ENCODE measurements at regions of chr12 and their contacts with region 1.

Region 1: GRCh38 chr12:102948941-102949352 is 8.5 kb upstream of the ASCL1 start:
- DNase-seq: no peak
- ATAC-seq: peak; percentile 32
- H3K4me3 ChIP-seq: no peak overlapping the region
- H3K27ac ChIP-seq: no peak overlapping the region
- H3K4me1 ChIP-seq: peaks cover 8% of the 10 kb centered on the region
- H3K27me3 ChIP-seq: no peaks in the 10 kb centered on the region; a peak in 1 of 4 replicates
- CTCF ChIP-seq: peak; percentile 88 to 94 (median 90)
- EP300 ChIP-seq: no peak
- POLR2A ChIP-seq: no peak
- RAD21 ChIP-seq: peak; percentile 88

Region 2: GRCh38 chr12:102728506-102729242 is 220.3 kb before region 1 on chr12:
- CTCF ChIA-PET with region 1: no interaction called
- POLR2A ChIA-PET with region 1: no interaction called
- RAD21 ChIA-PET with region 1: no interaction called
- SMC1A ChIA-PET with region 1: no interaction called
- in situ Hi-C with region 1: no loop called
- intact Hi-C with region 1: no loop called
- DNase-seq: peak; percentile 77
- ATAC-seq: peak; percentile 82
- H3K4me3 ChIP-seq: 0 out of 2 replicates have a peak overlapping the region, but pooled peaks have one; percentile 13
- H3K27ac ChIP-seq: peak overlapping the region; percentile 81
- H3K4me1 ChIP-seq: peaks cover 21% of the 10 kb centered on the region
- H3K27me3 ChIP-seq: no peaks in the 10 kb centered on the region
- CTCF ChIP-seq: no peak
- EP300 ChIP-seq: no peak
- POLR2A ChIP-seq: no peak
- RAD21 ChIP-seq: no peak

Region 3: DNA sequence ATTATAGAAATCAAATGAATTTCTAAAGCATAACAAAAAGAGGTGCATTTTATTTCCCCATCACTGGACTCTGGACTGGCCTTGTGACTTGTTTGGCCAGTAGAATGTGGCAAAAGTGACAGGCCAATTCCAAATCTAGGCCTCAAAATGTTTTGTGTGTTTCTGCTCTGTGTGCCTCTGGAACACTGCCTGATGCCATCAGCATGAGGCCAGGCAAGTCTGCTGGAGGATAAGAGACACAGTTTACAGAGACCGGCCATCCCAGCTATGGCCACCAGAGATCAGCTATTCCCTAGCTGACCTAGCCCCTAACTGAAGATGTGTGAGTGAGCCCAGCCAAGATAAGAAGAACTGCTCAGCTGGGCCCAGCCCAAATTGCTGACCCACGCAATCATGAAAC is 41.5 kb after region 1 on chr12:
- CTCF ChIA-PET with region 1: interaction called, 8 read pairs
- POLR2A ChIA-PET with region 1: no interaction called
- RAD21 ChIA-PET with region 1: interaction called, 12 read pairs
- SMC1A ChIA-PET with region 1: interaction called, 12 read pairs
- in situ Hi-C with region 1: no loop called
- intact Hi-C with region 1: no loop called
- DNase-seq: no peak
- ATAC-seq: peak; percentile 49
- H3K4me3 ChIP-seq: no peak overlapping the region
- H3K27ac ChIP-seq: no peak overlapping the region
- H3K4me1 ChIP-seq: no peaks in the 10 kb centered on the region; the same call in 1 of the 2 replicates
- H3K27me3 ChIP-seq: no peaks in the 10 kb centered on the region
- CTCF ChIP-seq: 0 out of 6 replicates have a peak, but pooled peaks of 1 of the 3 experiments have one; percentile 14
- EP300 ChIP-seq: no peak
- POLR2A ChIP-seq: no peak
- RAD21 ChIP-seq: peak; percentile 46; the same call in 1 of the 2 replicates

Region 4: DNA sequence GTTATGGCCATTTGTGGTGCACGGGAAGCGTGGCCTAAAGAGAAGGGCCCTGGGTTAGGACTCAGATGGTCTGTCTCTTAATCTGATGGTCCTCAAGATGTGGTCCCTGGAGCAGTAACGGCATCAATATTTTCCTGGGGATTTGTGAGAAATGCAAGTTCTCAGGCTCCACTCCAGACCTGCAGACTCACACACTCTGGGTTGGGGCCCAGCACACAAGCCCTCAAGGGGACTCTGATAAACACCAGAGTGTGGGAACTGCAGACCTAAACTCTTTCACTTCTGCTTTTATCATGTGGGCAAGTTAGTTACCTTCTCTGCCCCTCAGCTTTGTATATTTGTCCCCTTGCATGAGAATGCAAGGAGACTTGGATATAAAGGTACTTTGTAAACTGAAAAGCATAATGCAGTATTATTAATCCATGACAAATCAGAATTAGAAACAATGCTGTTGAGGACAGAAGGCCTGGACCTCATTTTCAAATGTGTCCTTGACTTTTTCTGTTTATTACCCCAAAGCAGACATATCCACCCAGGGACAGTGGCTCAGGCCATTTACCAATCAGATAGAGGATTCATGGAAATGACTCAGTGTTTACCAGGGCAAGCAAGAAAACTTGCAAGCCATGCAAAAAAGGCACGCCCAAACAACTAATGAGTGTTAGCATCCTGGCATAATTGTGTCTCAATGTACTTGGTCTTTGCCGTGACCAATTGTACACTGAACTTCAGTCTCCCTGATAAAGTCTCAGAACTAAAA is 165.5 kb after region 1 on chr12:
- CTCF ChIA-PET with region 1: interaction called, 5 read pairs
- POLR2A ChIA-PET with region 1: no interaction called
- RAD21 ChIA-PET with region 1: interaction called, 4 read pairs
- SMC1A ChIA-PET with region 1: interaction called, 18 read pairs
- in situ Hi-C with region 1: no loop called
- intact Hi-C with region 1: loop called (anchors 2 kb)
- DNase-seq: peak; percentile 95
- ATAC-seq: peak; percentile 98
- H3K4me3 ChIP-seq: no peak overlapping the region
- H3K27ac ChIP-seq: peak overlapping the region; percentile 80
- H3K4me1 ChIP-seq: peaks cover 19% of the 10 kb centered on the region
- H3K27me3 ChIP-seq: no peaks in the 10 kb centered on the region
- CTCF ChIP-seq: no peak
- EP300 ChIP-seq: peak; percentile 73 to 94; a peak in 3 of 4 replicates
- POLR2A ChIP-seq: no peak
- RAD21 ChIP-seq: peak; percentile 47

Region 5: GRCh38 chr12:103326190-103326589 is 377.2 kb after region 1 on chr12:
- CTCF ChIA-PET with region 1: interaction called, 8 read pairs
- POLR2A ChIA-PET with region 1: no interaction called
- RAD21 ChIA-PET with region 1: interaction called, 4 read pairs
- SMC1A ChIA-PET with region 1: interaction called, 5 read pairs
- in situ Hi-C with region 1: no loop called
- intact Hi-C with region 1: loop called (anchors 2 kb)
- DNase-seq: no peak
- ATAC-seq: peak; percentile 65
- H3K4me3 ChIP-seq: no peak overlapping the region
- H3K27ac ChIP-seq: no peak overlapping the region
- H3K4me1 ChIP-seq: no peaks in the 10 kb centered on the region
- H3K27me3 ChIP-seq: no peaks in the 10 kb centered on the region
- CTCF ChIP-seq: peak; percentile 26 to 42 (median 31); a peak in 4 of 6 replicates
- EP300 ChIP-seq: no peak
- POLR2A ChIP-seq: no peak
- RAD21 ChIP-seq: peak; percentile 70

Region 6: DNA sequence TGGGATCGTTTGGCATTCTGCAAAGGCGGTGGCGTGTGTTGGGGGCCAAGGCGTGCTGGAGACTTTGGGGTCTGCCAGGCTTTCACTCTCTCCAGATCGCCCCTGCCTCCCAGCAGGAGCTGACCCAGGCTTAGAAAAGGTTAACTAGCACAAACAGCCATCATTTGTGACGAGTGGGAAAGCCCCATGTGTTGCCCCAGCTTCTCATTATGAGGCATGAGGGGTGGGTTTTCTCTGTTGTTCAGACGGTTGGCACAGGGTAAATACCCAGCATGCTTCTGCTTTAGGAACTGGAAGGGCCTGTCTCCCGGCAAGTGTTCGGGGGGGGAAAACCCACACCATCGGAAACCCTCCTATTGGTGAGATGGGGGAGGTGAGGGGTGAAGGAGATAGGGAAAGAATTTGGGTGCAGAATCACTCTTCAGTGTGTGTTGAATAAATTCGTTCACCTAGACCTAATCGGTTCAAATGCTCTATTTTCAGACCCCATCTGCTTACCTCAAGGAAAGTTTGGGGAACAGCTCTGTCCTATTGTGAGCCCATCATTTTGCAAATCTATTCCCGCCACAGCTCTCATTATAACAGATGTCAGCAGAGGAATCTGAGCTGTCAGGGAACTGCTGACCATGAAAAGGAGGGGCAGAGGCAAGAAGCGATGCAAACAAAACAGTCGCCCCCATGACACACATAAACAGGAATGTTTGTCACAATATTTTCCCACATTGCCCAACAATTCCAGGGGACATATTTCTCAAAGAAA is 581.5 kb after region 1 on chr12:
- CTCF ChIA-PET with region 1: interaction called, 10 read pairs
- POLR2A ChIA-PET with region 1: no interaction called
- RAD21 ChIA-PET with region 1: interaction called, 6 read pairs
- SMC1A ChIA-PET with region 1: interaction called, 7 read pairs
- in situ Hi-C with region 1: no loop called
- intact Hi-C with region 1: no loop called
- DNase-seq: no peak
- ATAC-seq: peak; percentile 94
- H3K4me3 ChIP-seq: no peak overlapping the region
- H3K27ac ChIP-seq: no peak overlapping the region
- H3K4me1 ChIP-seq: peaks cover 8% of the 10 kb centered on the region
- H3K27me3 ChIP-seq: no peaks in the 10 kb centered on the region
- CTCF ChIP-seq: no peak
- EP300 ChIP-seq: no peak; a peak in 1 of 4 replicates
- POLR2A ChIP-seq: no peak
- RAD21 ChIP-seq: no peak

Measured in GM12878 (cell line).